GM12878 (cell line): ENCODE measurements at regions of chr12 and their contacts with region 1.

Region 1: DNA sequence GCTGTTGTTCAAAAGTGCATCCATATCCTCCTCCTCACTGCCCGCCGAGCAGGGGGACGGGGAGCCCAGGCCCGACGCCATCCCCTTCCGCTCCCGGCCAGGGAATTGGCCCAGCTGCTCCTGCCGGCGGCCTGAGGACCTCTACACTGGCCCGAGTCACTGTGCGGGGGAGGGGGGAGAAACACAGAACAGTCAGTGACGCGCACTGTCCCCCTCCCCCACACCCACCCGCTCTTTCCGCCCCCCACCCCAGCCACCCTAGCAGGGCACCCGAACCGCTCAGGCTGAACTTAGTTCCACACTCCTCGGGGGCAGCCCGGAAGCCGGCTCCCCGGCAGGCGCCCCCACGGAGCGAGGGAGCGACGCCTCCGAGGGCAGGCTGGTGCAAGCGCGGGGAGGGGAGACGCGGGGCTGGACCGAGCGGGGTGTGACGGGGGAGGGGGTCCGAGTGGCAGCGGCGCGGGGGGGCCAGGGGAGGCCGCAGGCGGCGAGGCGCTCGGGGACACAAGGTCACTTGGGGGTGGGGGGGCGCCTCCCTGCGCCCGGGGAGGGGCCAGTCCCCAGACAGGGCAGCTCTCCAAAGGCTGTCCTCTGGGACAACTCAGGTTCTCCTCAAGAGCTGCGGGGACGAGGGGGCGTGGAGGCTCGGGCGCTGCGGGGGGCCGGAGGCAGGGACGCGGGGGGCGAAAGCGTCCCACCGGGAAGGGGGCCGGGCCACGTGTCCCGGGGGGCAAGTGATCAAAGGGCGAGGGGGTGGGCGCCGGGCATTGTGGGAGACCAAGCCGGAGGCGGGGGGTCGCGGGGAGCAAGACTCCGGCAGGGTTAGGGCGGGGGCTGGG is 667 bp downstream of the CHD4 start:
- DNase-seq: no peak
- ATAC-seq: peak; percentile 56
- H3K4me3 ChIP-seq: peak overlapping the region; percentile 99
- H3K27ac ChIP-seq: peak overlapping the region; percentile 70
- H3K4me1 ChIP-seq: peaks cover 29% of the 10 kb centered on the region
- H3K27me3 ChIP-seq: no peaks in the 10 kb centered on the region
- CTCF ChIP-seq: no peak
- EP300 ChIP-seq: no peak
- POLR2A ChIP-seq: peak; percentile 74
- RAD21 ChIP-seq: no peak

Region 2: DNA sequence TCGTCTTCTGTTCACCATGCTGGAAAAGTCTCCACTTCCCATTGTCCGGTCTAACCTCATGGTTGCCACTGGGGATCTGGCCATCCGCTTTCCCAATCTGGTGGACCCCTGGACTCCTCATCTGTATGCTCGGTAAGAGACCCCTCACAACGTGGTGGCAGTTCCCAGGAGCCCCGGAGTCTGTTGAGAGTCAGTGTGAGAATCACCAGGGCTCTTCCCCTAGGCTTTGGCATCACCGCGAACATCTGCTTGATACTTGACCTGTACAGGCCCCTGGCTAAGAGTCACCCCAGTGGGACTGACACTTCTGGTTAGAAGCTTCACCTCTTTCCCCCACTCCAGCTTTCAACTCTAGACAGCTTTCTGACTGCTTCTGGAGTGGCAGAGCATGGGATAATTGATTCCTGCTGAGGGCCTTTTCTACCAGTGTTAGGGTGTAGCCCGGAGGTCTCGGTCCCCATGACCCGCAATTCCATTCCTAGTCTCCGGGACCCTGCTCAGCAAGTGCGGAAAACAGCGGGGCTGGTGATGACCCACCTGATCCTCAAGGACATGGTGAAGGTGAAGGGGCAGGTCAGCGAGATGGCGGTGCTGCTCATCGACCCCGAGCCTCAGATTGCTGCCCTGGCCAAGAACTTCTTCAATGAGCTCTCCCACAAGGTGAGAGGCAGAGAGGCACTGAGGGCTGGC is 78.2 kb before region 1 on chr12:
- CTCF ChIA-PET with region 1: no interaction called
- POLR2A ChIA-PET with region 1: no interaction called
- RAD21 ChIA-PET with region 1: no interaction called
- SMC1A ChIA-PET with region 1: no interaction called
- in situ Hi-C with region 1: no loop called
- intact Hi-C with region 1: no loop called
- DNase-seq: no peak
- ATAC-seq: no peak
- H3K4me3 ChIP-seq: no peak overlapping the region
- H3K27ac ChIP-seq: no peak overlapping the region
- H3K4me1 ChIP-seq: peaks cover 6% of the 10 kb centered on the region; the same call in 1 of the 2 replicates
- H3K27me3 ChIP-seq: no peaks in the 10 kb centered on the region
- CTCF ChIP-seq: no peak
- EP300 ChIP-seq: no peak
- POLR2A ChIP-seq: no peak
- RAD21 ChIP-seq: no peak

Region 3: DNA sequence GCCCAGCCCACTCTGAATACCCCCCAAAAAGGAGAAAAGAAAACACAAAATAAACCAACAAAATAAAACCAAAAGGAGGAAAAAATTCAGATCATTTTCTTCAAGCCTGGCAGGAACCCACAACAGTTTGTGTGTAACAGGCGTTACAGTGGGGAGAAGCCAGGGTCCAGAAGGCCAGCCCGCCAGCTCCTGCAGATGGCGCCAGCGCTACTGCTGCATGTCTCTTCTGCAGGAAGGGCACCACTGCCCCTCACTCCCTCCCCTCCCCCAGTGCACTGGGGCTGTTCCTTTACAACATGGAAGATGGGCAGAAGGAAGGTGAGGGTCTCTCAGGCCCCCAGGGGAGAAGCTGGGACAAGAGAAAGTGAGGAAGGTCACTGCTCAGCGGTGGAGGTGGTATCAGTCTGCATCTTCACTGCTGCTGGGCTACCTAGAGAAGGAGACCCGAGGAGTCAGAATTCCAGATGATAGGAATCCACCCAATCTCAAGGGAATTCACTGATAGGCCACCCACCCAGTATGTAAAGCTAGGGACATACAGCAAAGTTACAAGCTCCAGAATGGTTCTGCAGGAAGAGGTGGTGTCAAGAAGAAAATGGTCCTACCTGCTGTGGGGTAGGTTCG is 36.1 kb before region 1 on chr12:
- CTCF ChIA-PET with region 1: interaction called, 43 read pairs
- POLR2A ChIA-PET with region 1: interaction called, 8 read pairs
- RAD21 ChIA-PET with region 1: interaction called, 5 read pairs
- SMC1A ChIA-PET with region 1: interaction called, 6 read pairs
- in situ Hi-C with region 1: no loop called
- intact Hi-C with region 1: no loop called
- DNase-seq: no peak
- ATAC-seq: peak; percentile 54
- H3K4me3 ChIP-seq: no peak overlapping the region
- H3K27ac ChIP-seq: no peak overlapping the region
- H3K4me1 ChIP-seq: peaks cover 4% of the 10 kb centered on the region; the same call in 1 of the 2 replicates
- H3K27me3 ChIP-seq: no peaks in the 10 kb centered on the region
- CTCF ChIP-seq: peak; percentile 62 to 75 (median 64)
- EP300 ChIP-seq: no peak
- POLR2A ChIP-seq: 0 out of 2 replicates have a peak, but pooled peaks have one; percentile 37
- RAD21 ChIP-seq: peak; percentile 21; the same call in 1 of the 2 replicates

Region 4: DNA sequence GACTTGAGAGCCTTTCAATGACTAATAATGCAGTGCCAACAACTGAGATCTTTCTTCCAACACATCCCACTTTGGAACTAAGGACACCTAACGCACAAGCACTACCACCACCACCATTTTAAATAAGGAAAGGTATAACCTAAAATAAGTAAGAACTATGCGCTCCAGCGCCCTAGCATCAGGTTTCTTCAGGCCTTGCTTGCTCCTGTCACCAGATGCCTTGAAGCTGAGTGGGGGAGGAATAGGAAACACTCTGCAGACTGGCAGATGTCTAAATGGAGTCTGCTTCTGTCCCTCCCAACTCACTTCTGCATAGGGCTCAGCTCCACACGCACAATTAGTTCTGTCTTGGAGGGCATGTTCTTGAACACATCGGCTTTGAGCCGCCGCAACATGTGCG is 14.4 kb before region 1 on chr12:
- CTCF ChIA-PET with region 1: interaction called, 11 read pairs
- POLR2A ChIA-PET with region 1: interaction called, 4 read pairs
- RAD21 ChIA-PET with region 1: no interaction called
- SMC1A ChIA-PET with region 1: interaction called, 6 read pairs
- in situ Hi-C with region 1: no loop called
- intact Hi-C with region 1: no loop called
- DNase-seq: no peak
- ATAC-seq: no peak
- H3K4me3 ChIP-seq: no peak overlapping the region
- H3K27ac ChIP-seq: no peak overlapping the region
- H3K4me1 ChIP-seq: no peaks in the 10 kb centered on the region
- H3K27me3 ChIP-seq: no peaks in the 10 kb centered on the region
- CTCF ChIP-seq: no peak
- EP300 ChIP-seq: no peak
- POLR2A ChIP-seq: no peak
- RAD21 ChIP-seq: no peak

Region 5: DNA sequence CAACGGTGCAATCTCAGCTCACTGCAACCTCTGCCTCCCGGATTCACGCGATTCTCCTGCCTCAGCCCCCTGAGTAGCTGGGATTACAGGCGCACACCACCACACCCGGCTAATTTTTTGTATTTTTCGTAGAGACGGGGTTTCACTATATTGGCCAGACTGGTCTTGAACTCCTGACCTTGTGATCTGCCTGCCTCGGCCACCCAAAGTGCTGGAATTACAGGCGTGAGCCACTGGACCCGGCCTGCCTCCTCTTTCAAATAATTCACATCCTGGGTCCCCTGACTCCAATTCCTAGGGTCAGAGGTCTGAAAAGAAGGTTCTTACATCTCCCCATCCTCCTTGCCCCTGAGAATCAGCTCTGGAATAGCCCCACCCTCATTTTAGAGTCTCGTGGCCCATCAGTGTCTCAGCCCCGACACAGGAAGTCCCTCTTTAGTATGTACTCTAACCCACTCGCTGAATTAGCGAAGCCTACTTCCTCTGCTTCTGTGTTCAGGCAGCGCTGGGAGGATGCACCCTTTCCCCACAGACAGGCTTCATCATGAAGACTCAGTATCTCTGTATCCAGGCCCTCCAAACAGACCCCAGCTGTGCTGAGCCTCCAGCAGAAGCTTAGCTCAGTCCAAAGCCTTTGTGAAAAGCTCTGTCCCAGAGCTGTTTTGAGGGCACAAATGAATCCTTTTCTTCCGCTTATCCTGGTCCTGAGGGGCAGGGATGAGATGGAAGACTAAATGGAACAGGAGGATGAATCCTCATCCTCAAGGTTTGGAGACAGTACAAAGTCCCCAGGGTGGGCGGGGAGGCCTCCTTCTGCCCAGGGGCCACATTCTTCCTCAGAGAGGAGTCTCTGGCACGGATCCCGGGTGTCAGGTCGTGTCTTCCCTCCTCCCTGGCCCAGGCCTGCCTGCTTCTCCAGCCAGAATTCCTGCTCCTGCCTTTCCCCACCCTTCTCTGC is 25.8 kb after region 1 on chr12:
- CTCF ChIA-PET with region 1: interaction called, 6 read pairs
- POLR2A ChIA-PET with region 1: interaction called, 11 read pairs
- RAD21 ChIA-PET with region 1: interaction called, 4 read pairs
- SMC1A ChIA-PET with region 1: interaction called, 12 read pairs
- in situ Hi-C with region 1: no loop called
- intact Hi-C with region 1: no loop called
- DNase-seq: peak; percentile 81
- ATAC-seq: peak; percentile 78
- H3K4me3 ChIP-seq: peak overlapping the region; percentile 57
- H3K27ac ChIP-seq: peak overlapping the region; percentile 90
- H3K4me1 ChIP-seq: peaks cover 52% of the 10 kb centered on the region
- H3K27me3 ChIP-seq: no peaks in the 10 kb centered on the region
- CTCF ChIP-seq: no peak
- EP300 ChIP-seq: peak in 1 of 2 experiments; percentile 12; a peak in 1 of 4 replicates
- POLR2A ChIP-seq: peak; percentile 85
- RAD21 ChIP-seq: no peak

Region 6: GRCh38 chr12:6647083-6647604 is 40.6 kb after region 1 on chr12 and contains the start of gene ACRBP:
- CTCF ChIA-PET with region 1: interaction called, 11 read pairs
- POLR2A ChIA-PET with region 1: interaction called, 4 read pairs
- RAD21 ChIA-PET with region 1: interaction called, 8 read pairs
- SMC1A ChIA-PET with region 1: interaction called, 6 read pairs
- in situ Hi-C with region 1: no loop called
- intact Hi-C with region 1: no loop called
- DNase-seq: no peak
- ATAC-seq: peak; percentile 93
- H3K4me3 ChIP-seq: peak within 1 kb of the TSS; percentile 49
- H3K27ac ChIP-seq: no peak within 1 kb of the TSS; the same call in 1 of the 2 replicates
- H3K4me1 ChIP-seq: peaks cover 14% of the 10 kb centered on the region
- H3K27me3 ChIP-seq: no peaks in the 10 kb centered on the region
- CTCF ChIP-seq: no peak
- EP300 ChIP-seq: no peak
- POLR2A ChIP-seq: peak; percentile 19; the same call in 1 of the 2 replicates
- RAD21 ChIP-seq: no peak
- polyA plus RNA-seq, gene ACRBP: 0.64 to 0.80 TPM

Region 7: DNA sequence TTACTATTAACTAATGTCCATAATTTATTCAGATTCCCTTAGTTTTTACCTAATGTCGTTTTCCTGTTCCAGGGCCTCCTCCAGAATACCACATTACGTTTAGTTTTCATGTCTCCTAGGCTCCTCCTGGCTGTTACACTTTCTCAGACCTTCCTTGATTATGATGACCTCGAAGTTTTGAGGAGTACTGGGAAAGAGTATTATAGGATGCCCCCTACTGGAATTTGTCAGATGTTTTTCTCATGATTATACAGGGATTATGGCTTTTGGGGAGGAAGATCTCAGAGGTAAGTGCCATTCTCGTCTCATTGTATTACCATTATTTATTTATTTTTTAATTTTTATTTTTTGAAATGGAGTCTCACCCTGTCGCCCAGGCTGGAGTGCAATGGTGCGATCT is 436.3 kb after region 1 on chr12:
- CTCF ChIA-PET with region 1: no interaction called
- POLR2A ChIA-PET with region 1: no interaction called
- RAD21 ChIA-PET with region 1: no interaction called
- SMC1A ChIA-PET with region 1: no interaction called
- in situ Hi-C with region 1: no loop called
- intact Hi-C with region 1: no loop called
- DNase-seq: no peak
- ATAC-seq: peak; percentile 41; the same call in 1 of the 3 replicates
- H3K4me3 ChIP-seq: no peak overlapping the region
- H3K27ac ChIP-seq: no peak overlapping the region
- H3K4me1 ChIP-seq: no peaks in the 10 kb centered on the region; the same call in 1 of the 2 replicates
- H3K27me3 ChIP-seq: no peaks in the 10 kb centered on the region
- CTCF ChIP-seq: 0 out of 6 replicates have a peak, but pooled peaks of 1 of the 3 experiments have one; percentile 18
- EP300 ChIP-seq: no peak
- POLR2A ChIP-seq: no peak
- RAD21 ChIP-seq: 0 out of 2 replicates have a peak, but pooled peaks have one; percentile 29